ENCODE measurements at regions of chr2 and their contacts with region 1.

Region 1: GRCh38 chr2:105557021-105557920 is 158.4 kb upstream of the FHL2 start:
- DNase-seq: peak; percentile 26 to 79 (median 61)
- H3K4me3 ChIP-seq: peak overlapping the region in 2 of 7 experiments; percentile 7 to 55
- H3K27ac ChIP-seq: no peak overlapping the region
- H3K4me1 ChIP-seq: peaks cover 0 to 16% (median 9%) of the 10 kb centered on the region in 4 experiments
- H3K27me3 ChIP-seq: peaks cover 0 to 4% (median 0%) of the 10 kb centered on the region in 5 experiments

Region 2: DNA sequence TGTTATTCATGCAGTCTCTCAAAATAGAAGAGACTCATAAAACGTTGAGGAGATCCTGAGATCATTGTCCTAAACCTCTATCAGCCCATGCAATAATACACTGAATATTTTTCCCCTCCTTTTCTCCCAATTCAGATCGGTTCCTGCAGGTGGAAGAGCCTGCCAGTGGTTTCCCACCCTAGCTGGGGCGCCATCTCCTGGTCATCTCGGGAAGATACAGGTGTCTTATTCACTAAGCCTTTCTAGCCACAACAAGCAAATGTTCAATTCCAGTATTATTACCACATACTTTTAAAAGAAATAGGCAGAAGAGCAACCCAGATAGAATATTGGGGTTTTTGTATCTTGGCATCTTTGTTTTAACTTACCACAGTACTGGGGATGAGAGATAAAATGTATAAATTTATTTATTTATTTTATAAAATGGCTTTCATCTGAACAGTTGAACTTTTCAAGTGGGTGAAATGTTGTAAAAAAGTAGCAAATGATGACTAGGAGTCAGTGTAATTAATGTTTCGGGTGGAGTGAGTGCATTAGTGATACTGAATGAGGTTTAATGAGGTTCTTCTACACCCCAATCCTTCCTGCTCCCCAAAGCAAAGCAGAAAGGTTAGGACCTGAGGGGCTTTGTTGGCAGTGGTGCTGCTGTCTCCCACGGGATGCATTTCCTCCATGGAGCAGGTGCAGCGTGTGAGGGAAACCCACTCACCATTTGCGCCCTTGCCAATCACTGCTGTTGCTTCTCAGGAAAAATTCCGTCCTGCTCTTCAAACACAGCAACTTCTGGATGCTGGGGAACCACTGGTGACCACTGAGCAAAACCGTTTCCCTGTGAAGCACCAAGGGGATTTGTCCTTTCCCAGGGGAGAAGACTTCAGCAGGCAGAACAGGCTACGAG is 11.3 kb before region 1 on chr2:
- CTCF ChIA-PET with region 1: interaction called, 14 read pairs
- POLR2A ChIA-PET with region 1: no interaction called
- DNase-seq: peak; percentile 62 to 78 (median 73)
- H3K4me3 ChIP-seq: peak overlapping the region in 2 of 7 experiments; percentile 4 to 28
- H3K27ac ChIP-seq: no peak overlapping the region
- H3K4me1 ChIP-seq: peaks cover 0 to 13% (median 6%) of the 10 kb centered on the region in 4 experiments
- H3K27me3 ChIP-seq: peaks cover 0 to 2% (median 0%) of the 10 kb centered on the region in 5 experiments

Region 3: GRCh38 chr2:105592288-105592687 is 35.0 kb after region 1 on chr2:
- CTCF ChIA-PET with region 1: no interaction called
- POLR2A ChIA-PET with region 1: no interaction called
- DNase-seq: no peak
- H3K4me3 ChIP-seq: no peak overlapping the region
- H3K27ac ChIP-seq: no peak overlapping the region
- H3K4me1 ChIP-seq: no peaks in the 10 kb centered on the region
- H3K27me3 ChIP-seq: no peaks in the 10 kb centered on the region

Region 4: GRCh38 chr2:105604938-105605337 is 47.7 kb after region 1 on chr2:
- CTCF ChIA-PET with region 1: no interaction called
- POLR2A ChIA-PET with region 1: no interaction called
- DNase-seq: peak in 1 of 3 donors; percentile 6
- H3K4me3 ChIP-seq: no peak overlapping the region
- H3K27ac ChIP-seq: no peak overlapping the region
- H3K4me1 ChIP-seq: no peaks in the 10 kb centered on the region
- H3K27me3 ChIP-seq: no peaks in the 10 kb centered on the region

Region 5: GRCh38 chr2:105671156-105671555 is 113.9 kb after region 1 on chr2:
- CTCF ChIA-PET with region 1: no interaction called
- POLR2A ChIA-PET with region 1: no interaction called
- DNase-seq: no peak
- H3K4me3 ChIP-seq: no peak overlapping the region
- H3K27ac ChIP-seq: no peak overlapping the region
- H3K4me1 ChIP-seq: no peaks in the 10 kb centered on the region
- H3K27me3 ChIP-seq: no peaks in the 10 kb centered on the region